Activated CD8-positive, alpha-beta memory T cell treated with anti-CD3 and anti-CD28 coated beads, Interleukin-2, amount 10 ng/mL, durations not matched to agents 7 days and 5 days (primary cell): ENCODE measurements at regions of chr16 and their contacts with region 1.

Region 1: GRCh38 chr16:30534368-30535105 is at the start of gene ZNF747:
- DNase-seq: peak; percentile 94
- ATAC-seq: peak; percentile 86
- H3K4me3 Mint-ChIP-seq: peak within 1 kb of the TSS; percentile 82
- H3K27ac Mint-ChIP-seq: peak within 1 kb of the TSS; percentile 96
- H3K4me1 Mint-ChIP-seq: peaks cover 30% of the 10 kb centered on the region
- H3K27me3 Mint-ChIP-seq: no peaks in the 10 kb centered on the region
- total RNA-seq, gene ZNF747: 11.3 to 13.2 TPM

Region 2: GRCh38 chr16:30445408-30446202 is 88.9 kb before region 1 on chr16 and contains the start of gene SEPHS2:
- CTCF ChIA-PET with region 1: interaction called, 20 read pairs
- DNase-seq: peak; percentile 99
- ATAC-seq: peak; percentile 97
- H3K4me3 Mint-ChIP-seq: peak within 1 kb of the TSS; percentile 86
- H3K27ac Mint-ChIP-seq: peak within 1 kb of the TSS; percentile 90
- H3K4me1 Mint-ChIP-seq: peaks cover 51% of the 10 kb centered on the region
- H3K27me3 Mint-ChIP-seq: no peaks in the 10 kb centered on the region
- total RNA-seq, gene SEPHS2: 63.3 to 92.9 TPM

Region 3: GRCh38 chr16:30519120-30520049 is 15.2 kb before region 1 on chr16:
- CTCF ChIA-PET with region 1: no interaction called
- DNase-seq: no peak
- ATAC-seq: no peak
- H3K4me3 Mint-ChIP-seq: no peak overlapping the region
- H3K27ac Mint-ChIP-seq: peak overlapping the region; percentile 63
- H3K4me1 Mint-ChIP-seq: peaks cover 37% of the 10 kb centered on the region
- H3K27me3 Mint-ChIP-seq: no peaks in the 10 kb centered on the region

Region 4: DNA sequence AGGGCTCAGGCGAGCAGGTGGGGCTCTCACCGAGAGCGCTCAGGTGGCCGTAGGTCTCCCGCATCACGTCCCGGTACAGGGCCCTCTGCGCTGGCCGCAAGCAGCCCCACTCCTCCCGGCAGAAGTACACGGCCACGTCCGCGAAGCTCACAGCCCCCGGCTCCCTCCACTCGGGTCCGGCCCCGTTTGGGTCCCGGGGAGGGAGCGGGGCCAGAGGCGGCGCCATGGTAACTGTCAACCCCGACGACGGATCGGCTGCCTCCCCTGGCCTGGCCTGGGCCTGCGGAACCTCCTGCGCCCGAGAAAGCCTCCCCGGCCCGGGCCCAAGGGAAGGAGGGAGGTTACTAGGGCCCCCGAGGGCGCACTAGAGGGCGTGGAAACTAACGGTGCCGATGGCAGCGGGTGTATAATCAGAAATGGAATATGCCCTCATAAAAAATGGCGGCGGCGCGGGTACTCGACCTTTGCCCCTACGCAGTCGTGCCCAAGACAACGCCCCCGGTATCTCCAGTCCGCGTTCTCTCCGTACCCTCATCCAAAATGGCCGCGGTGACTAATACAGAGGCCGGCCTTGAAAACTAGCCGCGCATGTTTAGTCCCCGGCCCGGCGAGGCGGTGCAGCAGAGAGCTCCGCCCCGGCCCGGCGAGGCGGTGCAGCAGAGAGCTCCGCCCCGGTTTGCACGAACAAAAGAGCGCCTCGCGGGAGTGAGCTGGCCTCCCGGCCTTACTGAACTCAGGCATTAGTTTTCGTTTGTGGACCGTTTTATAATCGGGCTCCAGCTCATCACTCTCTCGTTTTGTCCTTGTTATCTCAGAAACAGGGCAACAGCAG is 23.6 kb after region 1 on chr16 and contains the start of gene ZNF764:
- CTCF ChIA-PET with region 1: interaction called, 60 read pairs
- DNase-seq: peak; percentile 99
- ATAC-seq: peak; percentile 96
- H3K4me3 Mint-ChIP-seq: peak within 1 kb of the TSS; percentile 83
- H3K27ac Mint-ChIP-seq: peak within 1 kb of the TSS; percentile 87
- H3K4me1 Mint-ChIP-seq: peaks cover 41% of the 10 kb centered on the region
- H3K27me3 Mint-ChIP-seq: no peaks in the 10 kb centered on the region
- total RNA-seq, gene ZNF764: 14.0 to 15.6 TPM

Region 5: DNA sequence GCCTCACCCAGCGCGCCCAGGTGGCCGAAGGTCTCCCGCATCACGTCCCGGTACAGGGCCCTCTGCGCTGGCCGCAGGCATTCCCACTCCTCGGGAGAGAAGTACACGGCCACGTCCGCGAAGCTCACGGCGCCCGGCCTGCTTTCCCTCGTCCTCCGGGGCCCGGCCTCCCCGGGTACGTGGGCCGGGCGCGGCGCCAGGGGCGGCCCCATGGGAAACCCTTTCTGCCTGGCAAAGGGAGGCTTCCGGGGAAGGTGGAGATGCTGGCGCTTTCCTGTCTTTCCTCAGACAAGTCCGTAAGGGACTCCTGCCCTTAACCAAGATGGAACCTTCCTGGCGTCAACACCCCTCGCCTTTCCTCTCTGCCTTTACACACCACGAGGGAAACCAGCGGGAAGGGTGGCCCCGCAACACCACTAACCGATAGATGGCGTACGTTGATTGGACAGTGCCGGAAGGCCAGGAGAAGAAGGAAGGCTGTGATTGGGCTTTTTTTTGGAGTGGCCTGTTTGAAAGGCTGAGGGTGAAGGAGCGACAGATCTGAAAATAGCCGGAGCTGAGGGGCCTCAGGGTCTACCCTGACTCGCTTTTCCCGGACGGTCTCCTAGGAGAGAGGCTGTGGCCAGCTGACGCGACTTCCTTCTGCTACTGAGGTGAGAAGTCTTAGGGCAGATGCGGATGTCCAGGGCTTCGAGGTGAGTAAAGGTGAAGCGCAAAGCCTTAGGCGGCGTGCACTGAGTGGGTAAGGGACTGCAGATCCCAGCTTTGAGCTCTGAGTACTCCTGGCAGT is 51.1 kb after region 1 on chr16 and contains the start of gene ZNF785:
- CTCF ChIA-PET with region 1: interaction called, 13 read pairs
- DNase-seq: peak; percentile 97
- ATAC-seq: peak; percentile 98
- H3K4me3 Mint-ChIP-seq: peak within 1 kb of the TSS; percentile 83
- H3K27ac Mint-ChIP-seq: peak within 1 kb of the TSS; percentile 92
- H3K4me1 Mint-ChIP-seq: peaks cover 44% of the 10 kb centered on the region
- H3K27me3 Mint-ChIP-seq: no peaks in the 10 kb centered on the region
- total RNA-seq, gene ZNF785: 18.9 to 21.2 TPM

Region 6: GRCh38 chr16:30609926-30610839 is 75.6 kb after region 1 on chr16 and contains the start of gene ZNF689:
- CTCF ChIA-PET with region 1: interaction called, 13 read pairs
- DNase-seq: peak; percentile 97
- ATAC-seq: peak; percentile 94
- H3K4me3 Mint-ChIP-seq: peak within 1 kb of the TSS; percentile 80
- H3K27ac Mint-ChIP-seq: peak within 1 kb of the TSS; percentile 95
- H3K4me1 Mint-ChIP-seq: peaks cover 24% of the 10 kb centered on the region
- H3K27me3 Mint-ChIP-seq: no peaks in the 10 kb centered on the region
- total RNA-seq, gene ZNF689: 12.2 to 15.3 TPM